ENCODE measurements at regions of chr2 and their contacts with region 1.

Region 1: GRCh38 chr2:121349721-121350401 is 64.9 kb upstream of the TFCP2L1 start:
- DNase-seq: no peak
- ATAC-seq: no peak
- H3K4me3 ChIP-seq: no peak overlapping the region
- H3K27ac ChIP-seq: no peak overlapping the region
- H3K4me1 ChIP-seq: no peaks in the 10 kb centered on the region
- H3K27me3 ChIP-seq: no peaks in the 10 kb centered on the region

Region 2: GRCh38 chr2:120605231-120605935 is 744.5 kb before region 1 on chr2:
- intact Hi-C with region 1: no loop called
- DNase-seq: peak; percentile 25 to 73
- ATAC-seq: no peak
- H3K4me3 ChIP-seq: no peak overlapping the region
- H3K27ac ChIP-seq: no peak overlapping the region
- H3K4me1 ChIP-seq: no peaks in the 10 kb centered on the region
- H3K27me3 ChIP-seq: no peaks in the 10 kb centered on the region

Region 3: DNA sequence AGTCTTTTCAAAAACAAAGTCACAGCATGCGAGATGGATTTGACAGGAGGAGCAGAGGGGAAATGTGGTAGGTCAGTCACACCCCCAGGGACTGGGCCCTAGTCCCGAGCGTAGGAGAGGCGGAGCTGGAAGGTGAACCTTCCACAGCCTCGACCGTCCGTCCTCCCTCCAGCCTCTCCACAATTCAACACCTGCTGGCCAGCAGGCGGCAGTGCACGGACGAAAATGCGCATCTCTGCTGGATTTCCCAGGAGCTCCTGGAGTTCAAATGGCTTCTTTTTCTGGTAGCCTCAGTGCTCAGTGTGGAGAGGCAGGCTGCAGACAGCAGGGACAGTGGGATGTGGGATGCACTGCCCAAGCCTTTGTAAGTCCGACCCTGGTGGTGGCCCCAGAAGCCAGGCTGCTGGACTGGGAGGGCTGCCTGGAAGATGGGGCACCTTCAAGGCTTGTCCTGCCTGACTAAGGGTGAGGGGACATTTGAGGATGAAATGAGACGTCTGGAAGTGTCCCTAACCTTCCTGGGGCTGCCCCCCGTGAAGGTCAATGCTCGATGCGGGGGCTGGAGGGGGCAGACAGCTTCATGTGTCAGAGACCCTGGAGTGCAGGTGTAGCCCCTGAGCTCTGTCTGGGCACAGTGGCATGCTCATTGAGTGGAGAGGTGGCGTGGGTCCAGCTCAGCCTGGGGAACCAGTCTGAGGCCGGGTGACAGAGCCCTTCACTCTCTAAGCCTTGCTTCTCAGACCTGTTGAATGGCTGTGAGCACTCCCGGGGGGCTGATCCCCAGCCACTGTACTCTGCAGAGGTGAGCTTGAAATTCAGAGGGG is 254.4 kb before region 1 on chr2:
- intact Hi-C with region 1: loop called (anchors 5 to 10 kb)
- DNase-seq: peak; percentile 70 to 81
- ATAC-seq: peak; percentile 53
- H3K4me3 ChIP-seq: no peak overlapping the region
- H3K27ac ChIP-seq: no peak overlapping the region
- H3K4me1 ChIP-seq: no peaks in the 10 kb centered on the region
- H3K27me3 ChIP-seq: no peaks in the 10 kb centered on the region